T-cell (primary cell): ENCODE measurements at regions of chr1 and their contacts with region 1.

Region 1: DNA sequence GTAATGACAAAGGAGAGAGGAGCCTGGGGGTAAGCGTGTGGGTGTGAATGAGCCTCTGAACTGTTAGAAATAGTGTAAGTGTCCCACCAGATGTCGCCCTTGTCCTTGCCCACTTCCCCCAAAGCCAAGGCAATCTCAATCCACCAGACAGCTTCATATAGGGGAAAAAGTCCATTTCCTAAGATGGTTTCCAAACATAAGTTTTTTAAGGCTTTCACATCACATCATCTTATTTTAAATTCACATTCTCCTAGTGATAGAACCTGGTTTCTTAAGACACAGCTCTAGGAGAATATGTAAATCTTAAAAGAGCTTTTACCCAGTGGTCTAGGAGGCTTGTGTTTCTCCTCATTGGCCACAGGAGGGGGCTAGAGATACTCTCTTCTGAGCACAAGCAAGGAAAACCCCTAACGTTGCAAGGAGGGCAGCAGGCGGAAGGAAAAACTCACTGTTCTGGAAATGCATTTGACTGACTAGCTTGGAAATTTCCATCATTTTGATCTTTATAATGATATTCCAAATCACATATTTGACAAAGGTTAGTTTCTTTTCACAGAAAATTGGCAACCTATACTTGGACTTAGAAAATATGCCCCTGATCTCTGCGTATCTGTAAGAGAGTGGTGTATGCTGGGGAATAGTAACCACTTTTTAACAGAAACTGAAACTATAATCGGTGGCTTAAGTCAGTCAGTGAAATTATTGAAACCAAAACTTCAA is 51.9 kb upstream of the LPAR3 start:
- DNase-seq: peak; percentile 22 to 97 (median 70)
- ATAC-seq: peak; percentile 90 to 95 (median 93)
- H3K4me3 ChIP-seq: peak overlapping the region; percentile 46
- H3K4me3 Mint-ChIP-seq: peak overlapping the region; percentile 79
- H3K27ac ChIP-seq: peak overlapping the region; percentile 85
- H3K27ac Mint-ChIP-seq: peak overlapping the region; percentile 91 to 94
- H3K4me1 ChIP-seq: peaks cover 0 to 9% of the 10 kb centered on the region in 2 experiments
- H3K4me1 Mint-ChIP-seq: peaks cover 6 to 12% (median 11%) of the 10 kb centered on the region in 3 donors
- H3K27me3 ChIP-seq: no peaks in the 10 kb centered on the region
- H3K27me3 Mint-ChIP-seq: no peaks in the 10 kb centered on the region

Region 2: GRCh38 chr1:84143796-84144565 is 800.9 kb before region 1 on chr1 and contains the start of gene PRKACB:
- CTCF ChIA-PET with region 1: interaction called, 5 to 15 read pairs
- POLR2A ChIA-PET with region 1: no interaction called
- DNase-seq: peak in 8 of 35 experiments; percentile 11 to 75 (median 14)
- ATAC-seq: peak; percentile 88 to 97 (median 93)
- H3K4me3 ChIP-seq: peak within 1 kb of the TSS; percentile 57 to 69
- H3K4me3 Mint-ChIP-seq: peak within 1 kb of the TSS; percentile 93 to 97 (median 97)
- H3K27ac ChIP-seq: peak within 1 kb of the TSS; percentile 69
- H3K27ac Mint-ChIP-seq: peak within 1 kb of the TSS; percentile 99
- H3K4me1 ChIP-seq: peaks cover 6 to 41% of the 10 kb centered on the region in 2 experiments
- H3K4me1 Mint-ChIP-seq: peaks cover 33 to 53% (median 36%) of the 10 kb centered on the region in 3 donors
- H3K27me3 ChIP-seq: no peaks in the 10 kb centered on the region
- H3K27me3 Mint-ChIP-seq: no peaks in the 10 kb centered on the region
- total RNA-seq, gene PRKACB: 101 to 119 (median 109) TPM

Region 3: GRCh38 chr1:84892705-84893618 is 52.0 kb before region 1 on chr1 and contains the start of gene LPAR3:
- CTCF ChIA-PET with region 1: no interaction called
- POLR2A ChIA-PET with region 1: no interaction called
- DNase-seq: peak in 9 of 35 experiments; percentile 1 to 28 (median 19)
- ATAC-seq: peak; percentile 43 to 78 (median 60)
- H3K4me3 ChIP-seq: peak within 1 kb of the TSS; percentile 38 to 49
- H3K4me3 Mint-ChIP-seq: peak within 1 kb of the TSS; percentile 75 to 81 (median 76)
- H3K27ac ChIP-seq: no peak within 1 kb of the TSS
- H3K27ac Mint-ChIP-seq: peak within 1 kb of the TSS in 1 of 2 donors; percentile 51
- H3K4me1 ChIP-seq: peaks cover 4 to 22% of the 10 kb centered on the region in 2 experiments
- H3K4me1 Mint-ChIP-seq: peaks cover 35 to 40% (median 35%) of the 10 kb centered on the region in 3 donors
- H3K27me3 ChIP-seq: peaks cover 2 to 23% of the 10 kb centered on the region in 2 experiments
- H3K27me3 Mint-ChIP-seq: peaks cover 24 to 27% of the 10 kb centered on the region in 2 donors
- total RNA-seq, gene LPAR3: 0.75 to 7.0 (median 2.9) TPM

Region 4: GRCh38 chr1:84913555-84913892 is 31.4 kb before region 1 on chr1:
- CTCF ChIA-PET with region 1: no interaction called
- POLR2A ChIA-PET with region 1: no interaction called
- DNase-seq: no peak
- ATAC-seq: no peak
- H3K4me3 ChIP-seq: no peak overlapping the region
- H3K4me3 Mint-ChIP-seq: no peak overlapping the region
- H3K27ac ChIP-seq: no peak overlapping the region
- H3K27ac Mint-ChIP-seq: no peak overlapping the region
- H3K4me1 ChIP-seq: no peaks in the 10 kb centered on the region
- H3K4me1 Mint-ChIP-seq: no peaks in the 10 kb centered on the region
- H3K27me3 ChIP-seq: no peaks in the 10 kb centered on the region
- H3K27me3 Mint-ChIP-seq: no peaks in the 10 kb centered on the region

Region 5: GRCh38 chr1:84959294-84959693 is 14.4 kb after region 1 on chr1:
- CTCF ChIA-PET with region 1: interaction called, 8 to 17 read pairs
- POLR2A ChIA-PET with region 1: interaction called in 1 of 2 experiments, 3 read pairs
- DNase-seq: peak in 1 of 35 experiments; percentile 50
- ATAC-seq: peak in 1 of 4 experiments; percentile 69
- H3K4me3 ChIP-seq: no peak overlapping the region
- H3K4me3 Mint-ChIP-seq: no peak overlapping the region
- H3K27ac ChIP-seq: no peak overlapping the region
- H3K27ac Mint-ChIP-seq: no peak overlapping the region
- H3K4me1 ChIP-seq: no peaks in the 10 kb centered on the region
- H3K4me1 Mint-ChIP-seq: peaks cover 0 to 6% (median 4%) of the 10 kb centered on the region in 3 donors
- H3K27me3 ChIP-seq: no peaks in the 10 kb centered on the region
- H3K27me3 Mint-ChIP-seq: peaks cover 0 to 4% of the 10 kb centered on the region in 2 donors

Region 6: DNA sequence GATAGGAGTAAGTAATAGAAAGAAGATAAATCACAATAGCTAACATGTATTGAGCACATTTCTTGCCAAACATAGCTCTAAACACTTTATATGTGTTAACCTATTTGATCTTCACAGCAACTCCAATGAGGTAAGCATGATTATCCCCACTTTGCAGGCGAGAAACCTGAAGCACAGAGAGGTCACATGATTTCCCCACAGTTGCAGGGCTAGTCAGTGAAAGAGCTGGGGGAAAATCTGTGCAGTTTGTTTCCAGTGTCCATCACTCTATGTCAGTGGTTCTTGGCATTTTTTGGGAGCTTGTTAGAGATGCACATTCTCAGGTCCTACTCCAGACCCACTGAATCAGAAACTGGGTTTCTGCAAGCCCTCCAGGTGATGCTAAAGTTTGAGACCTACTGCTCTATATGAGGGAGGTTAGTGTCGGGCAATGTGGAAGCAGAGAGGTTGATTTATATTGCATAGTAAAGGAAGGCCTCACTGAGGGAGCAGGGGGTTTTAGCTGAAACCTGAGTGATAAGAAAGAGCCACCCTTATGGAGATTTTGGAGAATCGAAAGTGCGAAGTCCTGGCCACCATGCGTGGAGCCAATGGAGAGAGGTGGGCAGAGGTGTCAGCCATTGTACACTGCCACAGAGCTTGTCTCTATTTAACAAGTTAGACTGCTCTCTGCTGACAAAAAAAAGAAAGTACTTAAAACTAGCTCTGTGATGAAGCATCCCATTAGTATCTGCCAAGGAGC is 82.5 kb after region 1 on chr1:
- CTCF ChIA-PET with region 1: interaction called, 31 to 316 read pairs
- POLR2A ChIA-PET with region 1: interaction called, 4 to 13 read pairs
- DNase-seq: peak in 16 of 35 experiments; percentile 7 to 68 (median 21)
- ATAC-seq: peak; percentile 79 to 96 (median 87)
- H3K4me3 ChIP-seq: peak overlapping the region in 1 of 2 donors; percentile 9
- H3K4me3 Mint-ChIP-seq: peak overlapping the region; percentile 18 to 68 (median 19)
- H3K27ac ChIP-seq: peak overlapping the region; percentile 35
- H3K27ac Mint-ChIP-seq: peak overlapping the region; percentile 86 to 91
- H3K4me1 ChIP-seq: peaks cover 0 to 3% of the 10 kb centered on the region in 2 experiments
- H3K4me1 Mint-ChIP-seq: peaks cover 10 to 11% (median 10%) of the 10 kb centered on the region in 3 donors
- H3K27me3 ChIP-seq: no peaks in the 10 kb centered on the region
- H3K27me3 Mint-ChIP-seq: no peaks in the 10 kb centered on the region

Region 7: DNA sequence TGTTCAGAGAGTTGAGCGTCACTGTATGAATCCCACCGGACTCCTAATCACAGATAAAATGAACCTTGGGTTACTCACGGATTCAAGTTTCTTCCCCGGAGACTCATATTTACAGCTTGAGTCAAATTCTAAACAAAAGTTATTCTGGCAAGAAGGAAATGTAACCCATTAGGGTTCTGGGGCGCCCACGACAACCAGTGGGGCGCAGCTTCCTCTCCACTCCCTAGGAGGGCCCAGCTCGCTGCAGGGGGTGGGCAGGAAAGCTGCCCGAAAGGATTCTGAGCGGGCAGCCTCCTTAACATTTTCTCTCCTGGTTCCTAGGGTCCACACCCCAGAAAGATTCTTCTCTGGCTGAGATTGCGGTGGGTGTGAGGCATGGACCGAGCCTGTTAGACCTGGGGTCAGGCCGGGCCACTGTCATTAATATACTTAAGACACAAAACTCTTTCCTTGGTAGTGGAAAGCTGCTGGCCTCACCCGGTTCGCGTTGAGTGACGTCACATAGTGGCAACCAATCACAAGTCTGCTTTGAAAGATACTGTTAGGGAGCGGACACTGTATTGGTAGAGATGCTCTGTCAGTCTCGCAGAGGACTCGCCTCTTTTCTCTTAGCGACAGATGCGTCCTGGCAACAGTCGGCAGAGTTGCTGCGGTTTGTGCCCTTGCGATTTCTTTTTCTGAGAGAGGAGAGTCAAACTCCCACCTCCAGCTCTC is 116.9 kb after region 1 on chr1:
- CTCF ChIA-PET with region 1: interaction called, 3 to 18 read pairs
- POLR2A ChIA-PET with region 1: no interaction called
- DNase-seq: peak; percentile 50 to 96 (median 83)
- ATAC-seq: peak; percentile 99 to 100 (median 100)
- H3K4me3 ChIP-seq: peak overlapping the region; percentile 47 to 69
- H3K4me3 Mint-ChIP-seq: peak overlapping the region; percentile 79 to 85 (median 83)
- H3K27ac ChIP-seq: no peak overlapping the region
- H3K27ac Mint-ChIP-seq: peak overlapping the region; percentile 62 to 76
- H3K4me1 ChIP-seq: peaks cover 8 to 10% of the 10 kb centered on the region in 2 experiments
- H3K4me1 Mint-ChIP-seq: peaks cover 14 to 16% (median 16%) of the 10 kb centered on the region in 3 donors
- H3K27me3 ChIP-seq: peaks cover 0 to 7% of the 10 kb centered on the region in 2 experiments
- H3K27me3 Mint-ChIP-seq: peaks cover 3 to 8% of the 10 kb centered on the region in 2 donors

Region 8: DNA sequence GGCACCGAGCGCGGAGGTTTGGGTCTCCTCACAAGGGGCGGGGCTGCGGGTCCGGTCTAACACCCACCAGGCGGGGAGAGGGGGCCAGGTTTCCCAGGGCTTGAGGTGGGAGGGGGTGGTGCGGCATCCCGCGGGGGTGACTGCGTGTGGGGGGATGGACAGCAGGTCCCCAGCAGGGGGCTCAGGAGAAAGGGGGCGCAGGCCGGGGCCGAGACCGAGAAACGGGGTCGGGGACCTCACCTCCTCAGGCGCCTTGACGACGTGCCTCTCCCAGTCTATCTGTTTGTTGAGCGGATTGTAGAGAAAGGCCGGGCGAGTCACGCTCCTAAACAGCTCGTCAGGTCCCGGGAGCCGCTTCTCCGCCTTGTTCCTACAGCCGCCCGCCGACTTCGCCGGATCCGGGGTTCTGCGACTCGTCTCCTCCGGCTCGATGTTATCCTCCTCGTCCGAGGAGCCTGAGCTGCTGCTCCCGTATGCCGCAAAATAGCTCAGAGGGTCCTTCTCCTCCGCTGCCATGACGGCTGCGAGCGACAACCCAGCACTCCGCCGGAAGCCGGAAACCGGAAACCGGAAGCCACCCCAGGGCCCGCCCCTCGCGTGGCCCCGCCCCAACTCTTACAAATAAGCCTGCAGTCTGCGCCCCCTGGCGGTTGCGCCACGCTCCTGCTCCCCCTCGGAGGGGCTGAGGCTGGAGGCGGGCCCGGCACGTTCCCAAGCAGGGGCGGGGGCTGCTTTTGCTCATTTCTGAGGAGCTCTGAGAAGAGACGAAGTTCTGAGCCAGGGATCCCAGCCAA is 314.4 kb after region 1 on chr1 and contains the start of gene C1orf52:
- CTCF ChIA-PET with region 1: interaction called, 32 to 285 read pairs
- POLR2A ChIA-PET with region 1: interaction called, 4 read pairs
- DNase-seq: peak; percentile 81 to 98 (median 94)
- ATAC-seq: peak; percentile 93 to 98 (median 96)
- H3K4me3 ChIP-seq: peak within 1 kb of the TSS; percentile 57 to 98
- H3K4me3 Mint-ChIP-seq: peak within 1 kb of the TSS; percentile 92 to 98 (median 96)
- H3K27ac ChIP-seq: peak within 1 kb of the TSS; percentile 48
- H3K27ac Mint-ChIP-seq: peak within 1 kb of the TSS; percentile 94 to 95
- H3K4me1 ChIP-seq: peaks cover 16 to 17% of the 10 kb centered on the region in 2 experiments
- H3K4me1 Mint-ChIP-seq: peaks cover 33 to 47% (median 45%) of the 10 kb centered on the region in 3 donors
- H3K27me3 ChIP-seq: no peaks in the 10 kb centered on the region
- H3K27me3 Mint-ChIP-seq: no peaks in the 10 kb centered on the region
- total RNA-seq, gene C1orf52: 29.8 to 48.6 (median 39.3) TPM

Region 9: DNA sequence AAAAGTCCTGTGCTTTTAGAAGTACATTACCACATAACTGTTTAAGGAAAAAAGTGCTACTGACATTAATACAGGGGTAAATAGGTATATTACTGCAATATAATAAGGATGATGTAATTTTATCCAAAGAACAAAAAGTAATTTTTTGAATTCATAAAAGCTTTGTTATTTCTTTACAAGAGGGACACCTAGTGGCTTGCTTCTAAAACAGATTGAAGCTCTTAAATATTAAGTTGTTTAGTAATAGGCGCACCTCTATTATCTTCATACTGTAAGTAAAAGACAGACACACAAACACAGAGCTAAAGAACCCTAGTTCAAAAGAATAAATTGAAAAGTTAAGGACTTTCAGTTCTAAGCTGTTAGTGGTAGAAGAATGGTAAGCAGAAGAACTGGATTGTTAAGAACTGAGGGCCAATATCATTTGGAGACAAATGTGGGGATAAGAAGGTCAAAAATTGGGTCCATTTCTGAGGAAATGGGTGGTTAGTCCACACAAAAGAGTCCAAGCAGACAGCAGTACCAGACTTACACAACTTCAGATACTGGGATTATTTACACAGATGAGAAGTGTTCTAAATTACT is 747.9 kb after region 1 on chr1:
- CTCF ChIA-PET with region 1: interaction called in 1 of 2 experiments, 11 read pairs
- POLR2A ChIA-PET with region 1: no interaction called
- DNase-seq: no peak
- ATAC-seq: no peak
- H3K4me3 ChIP-seq: no peak overlapping the region
- H3K4me3 Mint-ChIP-seq: no peak overlapping the region
- H3K27ac ChIP-seq: no peak overlapping the region
- H3K27ac Mint-ChIP-seq: no peak overlapping the region
- H3K4me1 ChIP-seq: no peaks in the 10 kb centered on the region
- H3K4me1 Mint-ChIP-seq: peaks cover 29 to 40% (median 36%) of the 10 kb centered on the region in 3 donors
- H3K27me3 ChIP-seq: no peaks in the 10 kb centered on the region
- H3K27me3 Mint-ChIP-seq: no peaks in the 10 kb centered on the region